CD8-positive, alpha-beta T cell (primary cell): ENCODE measurements at regions of chr7 and their contacts with region 1.

Region 1: GRCh38 chr7:105652359-105652993 is 71.2 kb upstream of the EFCAB10 start:
- DNase-seq: peak; percentile 34 to 73 (median 70)
- ATAC-seq: peak; percentile 92
- H3K4me3 ChIP-seq: no peak overlapping the region
- H3K4me3 Mint-ChIP-seq: no peak overlapping the region
- H3K27ac ChIP-seq: no peak overlapping the region
- H3K27ac Mint-ChIP-seq: no peak overlapping the region
- H3K4me1 ChIP-seq: no peaks in the 10 kb centered on the region
- H3K4me1 Mint-ChIP-seq: peaks cover 5% of the 10 kb centered on the region
- H3K27me3 ChIP-seq: no peaks in the 10 kb centered on the region
- H3K27me3 Mint-ChIP-seq: no peaks in the 10 kb centered on the region
- CTCF ChIP-seq: peak; percentile 70

Region 2: GRCh38 chr7:105664816-105665525 is 12.5 kb after region 1 on chr7:
- CTCF ChIA-PET with region 1: interaction called, 18 read pairs
- POLR2A ChIA-PET with region 1: interaction called, 3 read pairs
- intact Hi-C with region 1: no loop called
- DNase-seq: no peak
- ATAC-seq: no peak
- H3K4me3 ChIP-seq: no peak overlapping the region
- H3K4me3 Mint-ChIP-seq: no peak overlapping the region
- H3K27ac ChIP-seq: no peak overlapping the region
- H3K27ac Mint-ChIP-seq: no peak overlapping the region
- H3K4me1 ChIP-seq: no peaks in the 10 kb centered on the region
- H3K4me1 Mint-ChIP-seq: no peaks in the 10 kb centered on the region
- H3K27me3 ChIP-seq: no peaks in the 10 kb centered on the region
- H3K27me3 Mint-ChIP-seq: no peaks in the 10 kb centered on the region
- CTCF ChIP-seq: no peak

Region 3: DNA sequence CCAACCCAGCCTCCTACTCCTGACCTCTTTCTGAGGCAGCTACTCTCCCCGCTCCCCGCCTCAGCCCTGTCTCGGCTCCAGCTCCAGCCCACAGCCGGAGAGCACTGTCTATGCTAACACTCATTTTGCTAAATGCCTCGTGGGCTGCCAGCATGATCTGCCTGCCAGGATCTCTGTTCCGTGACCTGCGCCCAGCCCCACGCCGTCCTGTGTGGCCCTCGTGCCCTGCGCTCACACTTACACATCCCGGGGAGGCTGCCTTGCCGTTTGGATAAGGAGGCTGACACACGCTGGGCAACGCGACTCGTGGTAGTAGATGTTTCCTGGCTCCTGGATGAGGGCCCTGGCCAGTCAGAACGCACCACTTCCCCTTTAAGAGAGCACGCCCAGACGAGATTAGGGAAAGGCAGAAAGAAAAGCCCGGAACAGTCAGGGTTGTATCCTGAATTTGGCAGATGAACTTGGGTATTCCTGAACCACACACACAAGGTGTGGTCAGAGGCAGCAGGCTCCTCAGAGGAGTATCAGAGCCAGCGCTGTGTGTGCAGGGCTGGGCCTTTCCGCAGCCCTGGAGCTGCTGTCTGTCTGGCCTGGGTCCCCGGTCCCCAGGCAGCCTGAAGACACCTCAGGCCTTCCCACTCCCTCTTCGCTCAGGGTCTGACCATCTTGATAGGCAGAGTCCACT is 26.5 kb after region 1 on chr7:
- CTCF ChIA-PET with region 1: interaction called, 16 read pairs
- POLR2A ChIA-PET with region 1: no interaction called
- intact Hi-C with region 1: no loop called
- DNase-seq: peak in 1 of 9 experiments; percentile 26
- ATAC-seq: no peak
- H3K4me3 ChIP-seq: no peak overlapping the region
- H3K4me3 Mint-ChIP-seq: peak overlapping the region; percentile 33
- H3K27ac ChIP-seq: peak overlapping the region in 1 of 2 experiments; percentile 80
- H3K27ac Mint-ChIP-seq: peak overlapping the region; percentile 84
- H3K4me1 ChIP-seq: peaks cover 39% of the 10 kb centered on the region
- H3K4me1 Mint-ChIP-seq: peaks cover 70% of the 10 kb centered on the region
- H3K27me3 ChIP-seq: no peaks in the 10 kb centered on the region
- H3K27me3 Mint-ChIP-seq: no peaks in the 10 kb centered on the region
- CTCF ChIP-seq: no peak

Region 4: DNA sequence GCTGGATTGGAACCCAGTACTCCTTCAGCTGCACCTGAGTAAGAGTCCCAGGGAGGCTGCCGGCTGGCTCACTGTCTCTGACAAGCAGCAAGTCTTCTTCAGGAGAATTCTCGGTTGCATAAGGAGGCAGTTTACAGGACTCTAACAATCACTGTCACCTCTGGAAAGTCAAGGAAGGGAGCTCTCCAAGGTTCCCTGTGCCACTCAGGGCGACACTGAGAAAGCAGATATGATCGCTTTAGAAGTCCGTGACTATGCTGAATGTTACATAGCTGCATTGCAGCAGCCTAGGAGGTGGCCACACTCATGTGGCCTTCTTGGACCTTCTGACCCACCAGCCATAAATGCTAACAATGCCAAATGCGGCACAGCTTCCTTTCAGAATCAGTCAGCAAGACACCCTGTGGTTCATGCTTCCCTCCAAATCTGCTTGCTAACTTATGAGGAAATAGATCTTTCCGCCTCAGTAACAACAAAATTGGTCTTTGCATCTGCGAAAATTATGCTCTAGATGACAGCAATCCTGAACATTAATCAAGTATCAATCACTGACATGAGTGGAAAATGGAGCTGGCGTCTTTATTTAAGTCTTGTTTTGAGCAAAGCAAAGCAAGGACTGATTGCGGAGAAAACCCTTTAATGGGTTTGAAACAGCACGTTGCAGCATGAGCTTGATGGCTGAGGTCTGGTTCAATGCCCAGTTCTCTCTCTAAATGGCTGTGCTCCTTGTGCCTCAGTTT is 91.0 kb after region 1 on chr7:
- CTCF ChIA-PET with region 1: interaction called, 8 read pairs
- POLR2A ChIA-PET with region 1: no interaction called
- intact Hi-C with region 1: loop called in 1 of 2 experiments (anchors 5 kb)
- DNase-seq: no peak
- ATAC-seq: no peak
- H3K4me3 ChIP-seq: no peak overlapping the region
- H3K4me3 Mint-ChIP-seq: no peak overlapping the region
- H3K27ac ChIP-seq: no peak overlapping the region
- H3K27ac Mint-ChIP-seq: no peak overlapping the region
- H3K4me1 ChIP-seq: no peaks in the 10 kb centered on the region
- H3K4me1 Mint-ChIP-seq: peaks cover 26% of the 10 kb centered on the region
- H3K27me3 ChIP-seq: no peaks in the 10 kb centered on the region
- H3K27me3 Mint-ChIP-seq: no peaks in the 10 kb centered on the region
- CTCF ChIP-seq: no peak

Region 5: GRCh38 chr7:106009403-106010226 is 357.1 kb after region 1 on chr7:
- CTCF ChIA-PET with region 1: interaction called, 6 read pairs
- POLR2A ChIA-PET with region 1: no interaction called
- intact Hi-C with region 1: loop called (anchors 1 kb)
- DNase-seq: peak; percentile 61 to 89 (median 87)
- ATAC-seq: peak; percentile 98
- H3K4me3 ChIP-seq: no peak overlapping the region
- H3K4me3 Mint-ChIP-seq: peak overlapping the region; percentile 16
- H3K27ac ChIP-seq: no peak overlapping the region
- H3K27ac Mint-ChIP-seq: peak overlapping the region; percentile 18
- H3K4me1 ChIP-seq: peaks cover 32% of the 10 kb centered on the region
- H3K4me1 Mint-ChIP-seq: peaks cover 36% of the 10 kb centered on the region
- H3K27me3 ChIP-seq: no peaks in the 10 kb centered on the region
- H3K27me3 Mint-ChIP-seq: no peaks in the 10 kb centered on the region
- CTCF ChIP-seq: peak; percentile 91